ENCODE measurements at regions of chr9 and their contacts with region 1.

Region 1: DNA sequence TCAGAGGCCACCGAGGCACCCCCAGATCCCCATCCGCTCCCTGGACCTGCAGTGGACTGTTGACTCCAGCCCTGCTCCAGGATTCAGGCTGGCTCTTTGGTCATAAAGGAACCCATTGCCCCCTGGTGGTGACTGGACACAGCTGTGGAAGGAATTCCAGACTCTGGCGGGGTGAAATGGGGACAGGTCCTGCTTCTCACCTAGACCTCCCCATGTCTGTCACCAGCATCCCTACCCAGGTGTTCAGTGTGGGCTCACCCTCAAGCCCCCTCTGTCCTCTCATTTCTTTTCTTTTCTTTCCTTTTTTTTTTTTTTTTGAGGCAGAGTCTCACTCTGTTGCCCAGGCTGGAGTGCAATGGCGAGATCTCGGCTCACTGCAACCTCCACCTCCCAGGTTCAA is 25.5 kb upstream of the STXBP1 start:
- DNase-seq: peak; percentile 67

Region 2: DNA sequence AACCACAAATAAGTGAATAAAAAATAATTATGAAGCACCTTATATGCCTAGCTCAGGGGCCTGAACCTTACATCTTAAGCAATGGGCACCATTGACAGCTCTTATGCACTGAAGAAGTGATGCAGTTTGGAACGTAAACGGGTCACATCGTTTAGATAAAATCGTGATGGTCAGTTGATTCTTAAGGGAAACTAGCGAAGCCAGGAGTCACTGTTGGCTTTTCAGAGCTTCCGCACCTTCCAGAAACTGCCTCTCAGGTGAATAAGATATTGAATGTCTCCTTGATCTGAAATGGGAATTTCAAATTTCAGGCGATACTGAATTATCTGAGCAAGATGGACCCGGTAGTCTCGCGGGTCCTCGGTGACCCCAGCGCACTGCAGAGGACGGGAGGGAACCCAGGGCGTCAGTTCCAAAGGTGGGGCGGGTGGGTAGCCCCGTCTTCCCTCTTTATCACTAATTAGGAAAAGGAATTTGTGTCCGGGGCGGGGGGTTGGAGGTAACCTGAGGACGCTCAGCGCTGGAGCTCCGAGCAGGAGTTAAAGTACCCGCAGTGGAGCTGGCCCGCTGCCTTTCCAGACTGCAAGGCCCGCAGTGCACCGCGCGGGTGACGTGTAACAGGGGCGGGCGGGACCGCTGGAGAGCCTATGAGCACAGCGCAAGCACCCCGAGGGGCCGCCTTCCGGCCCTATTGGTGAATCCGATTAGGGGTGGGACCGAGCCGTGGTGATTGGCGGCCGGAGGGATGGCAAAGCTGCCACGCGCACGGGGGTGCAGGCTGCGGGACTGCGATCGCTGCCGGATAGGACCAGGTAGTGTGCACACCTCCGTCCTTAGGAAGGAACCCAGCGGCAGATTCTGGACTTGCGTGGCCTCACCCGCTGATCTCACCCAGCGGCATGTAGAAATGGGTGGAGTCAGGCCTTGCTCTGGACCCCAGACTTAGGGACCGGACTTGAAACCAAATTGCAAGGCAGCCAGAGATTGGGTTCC is 341.6 kb before region 1 on chr9:
- in situ Hi-C with region 1: no loop called
- DNase-seq: peak; percentile 91

Region 3: DNA sequence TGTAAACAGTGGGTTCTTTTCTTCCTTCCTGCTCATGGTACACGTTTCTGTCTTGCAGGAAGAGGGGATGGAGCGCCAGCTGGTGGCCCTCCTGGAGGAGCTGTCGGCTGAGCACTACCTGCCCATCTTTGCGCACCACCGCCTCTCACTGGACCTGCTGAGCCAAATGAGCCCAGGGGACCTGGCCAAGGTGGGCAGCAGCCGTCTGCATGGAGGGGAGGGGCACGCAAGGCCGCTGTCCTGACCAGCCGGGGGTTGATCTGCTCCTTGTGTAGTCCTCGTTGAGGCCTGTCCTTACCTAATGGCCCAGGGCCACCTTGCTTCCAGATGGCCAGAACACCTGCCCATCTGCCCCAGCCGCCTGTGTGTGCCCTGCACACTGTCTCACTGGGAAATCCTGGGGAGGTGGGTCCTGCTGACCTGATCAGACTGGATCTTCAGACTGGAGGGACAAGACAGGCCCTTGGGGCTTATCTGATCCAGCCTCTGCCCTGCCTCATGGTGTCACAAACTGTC is 90.6 kb before region 1 on chr9:
- in situ Hi-C with region 1: no loop called
- DNase-seq: no peak

Region 4: DNA sequence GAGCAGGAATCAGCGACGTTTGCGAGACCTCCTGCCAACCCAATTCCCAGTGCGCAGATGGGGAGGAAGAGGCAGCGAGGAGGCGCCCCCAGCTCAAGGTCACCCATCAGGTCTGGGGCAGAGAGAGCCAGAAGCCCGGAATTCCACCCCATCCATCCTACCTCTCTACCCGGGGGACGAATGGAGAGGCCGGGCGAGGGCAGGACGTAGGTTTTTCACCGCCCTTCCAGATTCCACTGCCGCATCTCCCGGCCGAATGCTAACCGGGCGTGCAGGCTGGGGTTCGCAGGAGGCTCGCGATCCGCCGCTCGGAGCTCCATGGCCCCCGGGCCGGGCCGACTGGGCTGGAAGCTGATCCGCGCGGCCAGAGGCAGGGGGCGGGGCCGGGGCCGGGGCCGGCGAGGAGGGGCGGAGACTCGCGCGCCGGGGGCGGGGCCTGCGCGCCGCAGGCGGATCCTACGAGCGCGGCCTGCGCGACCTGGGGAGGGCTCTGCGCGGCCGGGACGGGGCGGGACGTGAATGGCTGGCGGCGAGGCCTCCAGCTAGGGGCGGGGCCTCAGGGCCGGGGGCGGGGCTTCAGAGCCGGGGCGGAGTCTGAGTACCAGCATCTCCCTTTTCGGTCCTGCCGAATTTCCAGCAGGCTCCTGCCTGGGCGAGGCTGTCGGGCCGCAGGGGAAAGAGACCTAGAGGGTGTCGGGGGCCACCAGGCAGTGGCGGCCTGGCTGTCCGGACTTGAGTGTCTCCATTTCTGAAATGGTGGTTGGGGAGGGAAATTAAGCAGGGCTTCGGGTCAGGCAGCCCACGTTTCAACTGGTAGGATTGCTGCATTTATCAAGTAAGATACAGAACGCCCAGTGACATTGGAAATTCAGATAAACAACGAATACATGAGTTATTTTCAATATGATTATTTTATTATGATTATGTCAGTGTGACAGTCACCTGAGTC is 330.4 kb after region 1 on chr9 and contains the start of gene ST6GALNAC4:
- in situ Hi-C with region 1: loop called (anchors 25 kb)
- DNase-seq: peak; percentile 78